ENCODE measurements at regions of chr7 and their contacts with region 1.

Region 1: GRCh38 chr7:131753620-131754222 is 197.3 kb upstream of the PODXL start:
- DNase-seq: no peak
- H3K4me3 ChIP-seq: no peak overlapping the region
- H3K27ac ChIP-seq: no peak overlapping the region
- H3K4me1 ChIP-seq: no peaks in the 10 kb centered on the region
- H3K27me3 ChIP-seq: peaks cover 6% of the 10 kb centered on the region
- CTCF ChIP-seq: peak; percentile 36 to 78

Region 2: GRCh38 chr7:131574741-131575140 is 179.0 kb before region 1 on chr7:
- CTCF ChIA-PET with region 1: no interaction called
- dilution Hi-C with region 1: no loop called
- in situ Hi-C with region 1: no loop called
- intact Hi-C with region 1: no loop called
- DNase-seq: no peak
- H3K4me3 ChIP-seq: no peak overlapping the region
- H3K27ac ChIP-seq: no peak overlapping the region
- H3K4me1 ChIP-seq: no peaks in the 10 kb centered on the region
- H3K27me3 ChIP-seq: no peaks in the 10 kb centered on the region
- CTCF ChIP-seq: no peak

Region 3: DNA sequence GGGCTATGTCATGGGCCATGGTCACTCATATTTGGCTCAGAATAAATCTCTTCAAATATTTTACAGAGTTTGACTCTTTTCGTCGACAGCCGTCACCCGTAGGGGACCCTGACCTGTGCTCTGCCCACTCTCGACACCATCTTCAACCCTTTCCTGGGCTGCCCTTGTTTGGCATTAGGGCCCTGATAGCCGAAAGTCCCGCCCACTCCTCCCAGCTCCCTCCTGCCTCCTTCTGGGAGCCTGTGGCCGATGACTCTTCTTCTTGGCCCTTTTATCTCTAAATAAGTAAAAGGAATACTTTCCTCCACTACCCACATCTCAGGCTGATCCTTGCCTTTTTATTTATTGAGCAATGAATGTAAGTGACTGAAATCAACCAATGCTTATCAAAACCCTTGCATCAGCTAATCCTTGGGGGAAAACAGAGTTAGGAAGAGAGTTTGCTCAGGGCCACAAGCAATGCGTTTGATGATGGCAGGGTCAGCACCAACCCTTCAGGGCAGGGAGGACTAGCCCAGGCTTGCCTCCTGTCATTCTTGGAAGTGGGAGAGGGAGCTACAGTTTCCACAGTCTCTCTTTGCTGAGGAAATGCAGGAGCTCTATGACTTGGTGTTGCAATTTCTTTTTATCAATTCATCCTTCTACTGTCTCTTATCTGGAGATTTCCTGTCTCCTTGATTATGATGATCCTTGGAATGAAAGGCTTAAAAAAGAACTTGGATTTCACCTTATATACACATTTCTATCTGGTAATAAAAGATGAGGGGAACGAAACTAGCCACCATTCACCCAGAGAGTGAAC is 20.9 kb after region 1 on chr7:
- CTCF ChIA-PET with region 1: interaction called, 10 read pairs
- dilution Hi-C with region 1: no loop called
- in situ Hi-C with region 1: no loop called
- intact Hi-C with region 1: no loop called
- DNase-seq: peak; percentile 34
- H3K4me3 ChIP-seq: no peak overlapping the region
- H3K27ac ChIP-seq: no peak overlapping the region
- H3K4me1 ChIP-seq: peaks cover 16% of the 10 kb centered on the region
- H3K27me3 ChIP-seq: no peaks in the 10 kb centered on the region
- CTCF ChIP-seq: no peak